AG04450 (cell line): ENCODE measurements at regions of chr6 and their contacts with region 1.

Region 1: GRCh38 chr6:99458319-99458718 is 33.2 kb upstream of the PNISR start:
- DNase-seq: no peak
- H3K4me3 ChIP-seq: no peak overlapping the region
- H3K27ac ChIP-seq: no peak overlapping the region
- H3K27me3 ChIP-seq: no peaks in the 10 kb centered on the region
- CTCF ChIP-seq: peak; percentile 37

Region 2: DNA sequence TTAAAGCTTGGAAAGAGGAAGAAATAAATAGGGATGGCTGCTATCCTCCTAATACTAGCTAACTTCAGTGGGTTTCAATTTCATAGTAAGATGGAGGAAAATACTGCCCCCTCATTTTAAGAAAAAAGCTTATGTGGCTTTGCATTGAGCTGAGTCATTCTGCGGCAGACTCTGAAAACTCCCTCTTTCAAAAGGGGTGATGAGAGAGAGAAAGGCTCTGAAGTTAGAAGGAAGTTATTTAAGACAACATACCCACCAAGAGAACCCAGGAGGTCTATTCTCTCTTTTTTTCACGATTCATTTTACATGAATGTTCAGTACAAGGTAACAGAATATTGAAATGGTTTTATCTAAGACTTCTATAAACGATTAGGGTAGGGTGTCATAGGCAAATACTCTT is 152.8 kb after region 1 on chr6:
- CTCF ChIA-PET with region 1: no interaction called
- POLR2A ChIA-PET with region 1: interaction called, 11 read pairs
- DNase-seq: no peak
- H3K4me3 ChIP-seq: no peak overlapping the region
- H3K27ac ChIP-seq: no peak overlapping the region
- H3K27me3 ChIP-seq: peaks cover 93% of the 10 kb centered on the region
- CTCF ChIP-seq: no peak

Region 3: DNA sequence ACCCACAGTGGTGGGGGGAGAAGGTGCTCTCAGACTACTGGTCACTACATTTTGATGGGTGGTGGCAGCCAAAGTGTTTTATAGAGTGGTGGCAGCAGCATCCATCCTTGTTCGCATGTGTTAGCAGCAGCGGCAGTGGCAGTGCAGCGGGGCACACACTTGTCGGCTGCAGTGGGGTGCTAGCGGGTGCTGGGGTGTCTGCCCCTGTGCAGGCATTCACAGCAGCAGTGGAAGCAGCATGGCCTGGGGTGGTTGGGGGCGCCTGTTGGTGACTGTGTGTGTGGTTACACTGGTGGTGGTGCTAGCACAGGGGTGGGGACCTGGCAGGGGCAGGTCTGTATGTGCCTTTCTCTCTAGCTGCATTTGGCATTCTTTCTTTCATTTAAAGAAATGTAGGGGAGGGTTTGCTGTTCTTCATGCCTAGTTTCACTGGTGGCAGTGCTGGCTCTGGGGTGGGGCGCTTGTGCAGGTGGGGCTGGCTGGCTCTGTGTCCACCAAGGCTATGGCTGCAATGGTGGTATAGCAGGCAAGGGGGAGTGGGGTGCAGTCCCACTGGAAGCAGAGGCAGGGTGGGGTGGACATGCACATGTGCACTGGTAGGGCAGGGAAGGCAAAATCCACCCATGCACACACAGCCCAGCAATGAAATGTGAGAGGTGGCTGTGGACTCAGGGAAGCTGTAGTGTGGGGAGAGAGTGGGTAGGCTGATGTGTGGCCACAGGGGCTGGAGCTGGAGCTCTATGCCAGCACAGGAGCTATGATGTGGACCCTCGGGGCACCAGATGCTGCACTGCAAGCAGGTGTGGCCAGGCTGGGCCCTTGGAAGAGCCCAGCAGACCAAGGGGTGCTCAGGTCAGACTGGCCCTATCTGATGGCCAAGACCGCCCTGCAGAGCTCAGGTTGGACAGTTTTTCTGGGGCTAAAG is 321.6 kb after region 1 on chr6:
- CTCF ChIA-PET with region 1: no interaction called
- POLR2A ChIA-PET with region 1: no interaction called
- DNase-seq: no peak
- H3K4me3 ChIP-seq: no peak overlapping the region
- H3K27ac ChIP-seq: no peak overlapping the region
- H3K27me3 ChIP-seq: peaks cover 2% of the 10 kb centered on the region
- CTCF ChIP-seq: no peak